H1 (cell line): ENCODE measurements at regions of chr11 and their contacts with region 1.

Region 1: GRCh38 chr11:120527111-120527761 is 15.7 kb downstream of the GRIK4 start:
- DNase-seq: peak; percentile 84 to 87
- H3K4me3 ChIP-seq: peak overlapping the region in 2 of 4 experiments; percentile 24 to 31; a peak in 3 of 8 replicates
- H3K27ac ChIP-seq: no peak overlapping the region
- H3K4me1 ChIP-seq: peaks cover 3 to 28% (median 16%) of the 10 kb centered on the region in 4 experiments
- H3K27me3 ChIP-seq: no peaks in the 10 kb centered on the region; a peak in 2 of 7 replicates
- CTCF ChIP-seq: peak; percentile 46 to 56 (median 56)
- EP300 ChIP-seq: peak in 1 of 2 experiments; percentile 80; a peak in 1 of 3 replicates
- POLR2A ChIP-seq: no peak
- RAD21 ChIP-seq: peak in 1 of 2 experiments; percentile 49; a peak in 3 of 4 replicates

Region 2: GRCh38 chr11:120482149-120482548 is 45.1 kb before region 1 on chr11:
- CTCF ChIA-PET with region 1: no interaction called
- POLR2A ChIA-PET with region 1: no interaction called
- DNase-seq: no peak
- H3K4me3 ChIP-seq: no peak overlapping the region
- H3K27ac ChIP-seq: no peak overlapping the region
- H3K4me1 ChIP-seq: peaks cover 0 to 2% (median 0%) of the 10 kb centered on the region in 4 experiments; a peak in 1 of 7 replicates
- H3K27me3 ChIP-seq: no peaks in the 10 kb centered on the region
- CTCF ChIP-seq: no peak
- EP300 ChIP-seq: no peak
- POLR2A ChIP-seq: no peak
- RAD21 ChIP-seq: no peak

Region 3: GRCh38 chr11:120539667-120540369 is 12.6 kb after region 1 on chr11:
- CTCF ChIA-PET with region 1: interaction called, 12 read pairs
- POLR2A ChIA-PET with region 1: interaction called, 6 read pairs
- DNase-seq: no peak
- H3K4me3 ChIP-seq: no peak overlapping the region
- H3K27ac ChIP-seq: no peak overlapping the region
- H3K4me1 ChIP-seq: no peaks in the 10 kb centered on the region; a peak in 1 of 7 replicates
- H3K27me3 ChIP-seq: no peaks in the 10 kb centered on the region
- CTCF ChIP-seq: no peak
- EP300 ChIP-seq: no peak
- POLR2A ChIP-seq: no peak
- RAD21 ChIP-seq: no peak